ENCODE measurements at regions of chr18 and their contacts with region 1.

Region 1: DNA sequence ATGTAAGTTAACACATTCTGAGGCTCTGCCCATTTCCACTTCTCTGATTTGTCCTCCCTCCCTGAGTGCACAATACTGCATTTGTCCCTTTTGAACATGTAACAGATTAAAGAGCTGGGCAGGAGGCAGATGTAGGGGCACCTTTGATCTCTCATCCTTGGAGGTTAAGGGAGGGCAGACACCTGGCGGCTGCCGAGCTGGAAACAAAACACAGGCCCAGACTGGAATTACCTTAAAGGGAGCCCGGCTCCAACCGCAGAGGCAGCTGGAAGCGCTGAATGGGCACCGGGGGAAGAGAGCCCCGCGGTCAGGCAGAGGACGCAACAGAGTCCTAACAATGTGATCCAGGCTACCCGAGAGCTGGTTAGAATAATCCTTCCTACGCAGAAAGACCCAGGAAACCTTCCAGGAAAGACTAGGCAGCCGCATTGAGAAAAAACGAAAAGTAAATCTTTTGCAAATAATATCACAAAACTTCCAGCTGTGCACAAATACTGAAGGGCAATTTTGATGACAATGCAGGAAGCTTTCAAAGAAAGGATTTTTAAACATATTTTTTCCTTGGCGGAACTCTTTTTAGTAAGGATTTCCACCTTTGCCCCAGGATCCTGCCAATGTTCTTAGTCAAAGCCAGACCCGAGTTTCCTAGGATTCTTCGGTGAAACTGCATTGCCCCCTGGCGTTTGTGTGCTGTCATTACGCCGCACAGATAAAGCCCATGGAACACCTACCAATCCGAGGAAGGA is 216.0 kb downstream of the TGIF1 start:
- DNase-seq: peak; percentile 33 to 78 (median 60)
- ATAC-seq: peak; percentile 84
- H3K4me3 ChIP-seq: no peak overlapping the region
- H3K4me3 Mint-ChIP-seq: peak overlapping the region in 9 of 10 donors; percentile 38 to 62 (median 50)
- H3K27ac ChIP-seq: no peak overlapping the region
- H3K27ac Mint-ChIP-seq: peak overlapping the region in 2 of 9 donors; percentile 31 to 84
- H3K4me1 ChIP-seq: no peaks in the 10 kb centered on the region
- H3K4me1 Mint-ChIP-seq: peaks cover 0 to 26% (median 8%) of the 10 kb centered on the region in 7 donors
- H3K27me3 ChIP-seq: no peaks in the 10 kb centered on the region
- H3K27me3 Mint-ChIP-seq: peaks cover 0 to 5% (median 0%) of the 10 kb centered on the region in 5 donors

Region 2: GRCh38 chr18:2994603-2995432 is 671.1 kb before region 1 on chr18:
- CTCF ChIA-PET with region 1: interaction called, 5 read pairs
- POLR2A ChIA-PET with region 1: no interaction called
- intact Hi-C with region 1: loop called in 1 of 2 experiments (anchors 5 kb)
- DNase-seq: peak; percentile 57 to 83 (median 77)
- ATAC-seq: peak; percentile 92
- H3K4me3 ChIP-seq: peak overlapping the region; percentile 35
- H3K4me3 Mint-ChIP-seq: peak overlapping the region; percentile 41 to 80 (median 68)
- H3K27ac ChIP-seq: peak overlapping the region; percentile 62
- H3K27ac Mint-ChIP-seq: peak overlapping the region; percentile 54 to 91 (median 84)
- H3K4me1 ChIP-seq: peaks cover 38 to 47% of the 10 kb centered on the region in 2 donors
- H3K4me1 Mint-ChIP-seq: peaks cover 48 to 87% (median 83%) of the 10 kb centered on the region in 7 donors
- H3K27me3 ChIP-seq: no peaks in the 10 kb centered on the region
- H3K27me3 Mint-ChIP-seq: no peaks in the 10 kb centered on the region

Region 3: GRCh38 chr18:3281456-3282400 is 384.2 kb before region 1 on chr18:
- CTCF ChIA-PET with region 1: interaction called, 84 read pairs
- POLR2A ChIA-PET with region 1: interaction called, 5 read pairs
- intact Hi-C with region 1: loop called (anchors 1 kb)
- DNase-seq: peak in 7 of 9 donors; percentile 51 to 77 (median 68)
- ATAC-seq: peak; percentile 93
- H3K4me3 ChIP-seq: no peak overlapping the region
- H3K4me3 Mint-ChIP-seq: no peak overlapping the region
- H3K27ac ChIP-seq: no peak overlapping the region
- H3K27ac Mint-ChIP-seq: no peak overlapping the region
- H3K4me1 ChIP-seq: no peaks in the 10 kb centered on the region
- H3K4me1 Mint-ChIP-seq: peaks cover 0 to 8% (median 0%) of the 10 kb centered on the region in 7 donors
- H3K27me3 ChIP-seq: no peaks in the 10 kb centered on the region
- H3K27me3 Mint-ChIP-seq: no peaks in the 10 kb centered on the region

Region 4: DNA sequence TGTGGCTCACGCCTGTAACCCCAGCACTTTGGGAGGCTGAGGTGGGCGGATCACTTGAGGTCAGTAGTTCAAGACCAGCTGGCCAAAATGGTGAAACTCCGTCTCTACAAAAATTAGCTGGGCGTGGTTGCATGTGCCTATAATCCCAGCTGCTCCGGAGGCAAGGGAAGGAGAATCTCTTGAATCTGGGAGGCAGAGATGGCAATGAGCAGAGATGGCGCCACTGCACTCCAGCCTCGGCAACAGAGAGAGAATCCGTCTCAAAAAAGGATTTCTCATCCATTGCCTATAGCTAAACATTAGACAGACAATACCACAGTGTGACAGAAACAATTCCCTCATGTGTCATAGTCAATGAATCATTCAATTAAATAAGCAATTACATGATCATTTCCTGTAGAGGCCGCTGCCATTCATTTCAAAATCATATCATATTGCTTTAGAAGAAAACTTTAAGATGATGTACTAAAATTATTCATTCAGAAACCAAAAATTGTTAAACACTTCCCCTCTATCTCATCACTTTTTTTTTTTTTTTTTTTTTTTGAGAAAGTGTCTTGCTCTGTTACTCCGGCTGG is 285.5 kb before region 1 on chr18:
- CTCF ChIA-PET with region 1: no interaction called
- POLR2A ChIA-PET with region 1: no interaction called
- intact Hi-C with region 1: loop called (anchors 1 to 5 kb)
- DNase-seq: no peak
- ATAC-seq: peak; percentile 59
- H3K4me3 ChIP-seq: no peak overlapping the region
- H3K4me3 Mint-ChIP-seq: no peak overlapping the region
- H3K27ac ChIP-seq: no peak overlapping the region
- H3K27ac Mint-ChIP-seq: no peak overlapping the region
- H3K4me1 ChIP-seq: no peaks in the 10 kb centered on the region
- H3K4me1 Mint-ChIP-seq: no peaks in the 10 kb centered on the region
- H3K27me3 ChIP-seq: no peaks in the 10 kb centered on the region
- H3K27me3 Mint-ChIP-seq: peaks cover 0 to 10% (median 4%) of the 10 kb centered on the region in 5 donors

Region 5: GRCh38 chr18:3454365-3455089 is 211.4 kb before region 1 on chr18:
- CTCF ChIA-PET with region 1: interaction called, 46 read pairs
- POLR2A ChIA-PET with region 1: interaction called, 6 read pairs
- intact Hi-C with region 1: loop called (anchors 1 kb)
- DNase-seq: peak in 7 of 9 donors; percentile 40 to 64 (median 60)
- ATAC-seq: no peak
- H3K4me3 ChIP-seq: peak overlapping the region; percentile 48
- H3K4me3 Mint-ChIP-seq: peak overlapping the region; percentile 85 to 96 (median 94)
- H3K27ac ChIP-seq: peak overlapping the region; percentile 96
- H3K27ac Mint-ChIP-seq: peak overlapping the region; percentile 89 to 100 (median 99)
- H3K4me1 ChIP-seq: peaks cover 15 to 35% of the 10 kb centered on the region in 2 donors
- H3K4me1 Mint-ChIP-seq: peaks cover 22 to 70% (median 32%) of the 10 kb centered on the region in 7 donors
- H3K27me3 ChIP-seq: no peaks in the 10 kb centered on the region
- H3K27me3 Mint-ChIP-seq: no peaks in the 10 kb centered on the region

Region 6: GRCh38 chr18:3604498-3605408 is 61.2 kb before region 1 on chr18:
- CTCF ChIA-PET with region 1: interaction called, 11 read pairs
- POLR2A ChIA-PET with region 1: no interaction called
- intact Hi-C with region 1: loop called in 1 of 2 experiments (anchors 2 kb)
- DNase-seq: peak in 6 of 9 donors; percentile 20 to 55 (median 48)
- ATAC-seq: peak; percentile 71
- H3K4me3 ChIP-seq: peak overlapping the region; percentile 43
- H3K4me3 Mint-ChIP-seq: no peak overlapping the region
- H3K27ac ChIP-seq: peak overlapping the region; percentile 52
- H3K27ac Mint-ChIP-seq: no peak overlapping the region
- H3K4me1 ChIP-seq: peaks cover 32 to 38% of the 10 kb centered on the region in 2 donors
- H3K4me1 Mint-ChIP-seq: peaks cover 0 to 27% (median 7%) of the 10 kb centered on the region in 7 donors
- H3K27me3 ChIP-seq: no peaks in the 10 kb centered on the region
- H3K27me3 Mint-ChIP-seq: no peaks in the 10 kb centered on the region

Region 7: GRCh38 chr18:3947383-3947782 is 281.4 kb after region 1 on chr18:
- CTCF ChIA-PET with region 1: no interaction called
- POLR2A ChIA-PET with region 1: no interaction called
- intact Hi-C with region 1: no loop called
- DNase-seq: no peak
- ATAC-seq: no peak
- H3K4me3 ChIP-seq: no peak overlapping the region
- H3K4me3 Mint-ChIP-seq: no peak overlapping the region
- H3K27ac ChIP-seq: no peak overlapping the region
- H3K27ac Mint-ChIP-seq: no peak overlapping the region
- H3K4me1 ChIP-seq: no peaks in the 10 kb centered on the region
- H3K4me1 Mint-ChIP-seq: no peaks in the 10 kb centered on the region
- H3K27me3 ChIP-seq: no peaks in the 10 kb centered on the region
- H3K27me3 Mint-ChIP-seq: peaks cover 0 to 12% (median 7%) of the 10 kb centered on the region in 5 donors